Posterior vena cava (tissue), 2 donors: ENCODE measurements at regions of chr15 and their contacts with region 1.

Region 1: GRCh38 chr15:95998935-95999334 is 331.6 kb upstream of the NR2F2 start:
- DNase-seq: no peak

Region 2: DNA sequence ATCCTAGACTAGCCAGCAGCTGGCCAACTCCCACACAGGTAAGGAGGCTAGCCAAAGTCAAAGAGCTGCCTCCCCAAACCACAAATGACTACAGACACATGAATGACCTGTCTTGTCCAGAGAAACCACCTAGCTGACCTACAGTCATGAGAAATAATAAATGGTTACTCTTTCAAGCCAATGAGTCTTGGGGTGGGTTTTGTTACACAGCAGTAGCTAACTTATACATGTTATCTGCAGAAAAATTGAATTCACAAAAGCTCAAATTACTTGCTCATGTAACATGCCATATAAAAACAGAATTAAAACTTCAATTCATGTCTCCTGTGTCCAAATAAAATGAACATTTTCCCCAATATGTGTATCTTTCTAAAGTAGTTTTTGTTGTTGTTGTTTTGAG is 24.1 kb after region 1 on chr15:
- intact Hi-C with region 1: loop called in 1 of 2 experiments (anchors 1 kb)
- DNase-seq: no peak